Mammary epithelial cell (primary cell): ENCODE measurements at regions of chr12 and their contacts with region 1.

Region 1: DNA sequence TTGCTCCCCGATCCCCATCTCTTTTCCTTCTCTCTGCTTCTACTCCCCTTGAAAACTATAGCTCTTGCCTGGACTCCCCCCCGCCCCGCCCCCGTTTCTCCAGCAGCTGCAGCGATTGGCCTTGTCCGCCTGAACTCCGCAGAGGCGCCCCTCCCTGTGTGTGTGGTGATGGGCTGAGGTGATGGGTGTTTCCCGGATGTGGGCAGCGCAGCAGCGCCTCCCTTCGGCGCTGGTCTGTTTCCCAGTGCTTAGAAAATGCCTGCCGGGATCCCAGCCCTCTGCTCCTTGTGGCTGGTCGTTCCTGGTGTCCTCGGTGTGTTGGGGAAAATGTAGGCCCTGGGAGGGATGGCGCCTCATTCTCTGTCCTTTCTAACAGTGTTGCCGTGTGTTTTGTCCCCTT is 43.3 kb downstream of the GALNT8 start:
- DNase-seq: no peak
- H3K4me3 ChIP-seq: no peak overlapping the region
- H3K27ac ChIP-seq: no peak overlapping the region
- H3K4me1 ChIP-seq: no peaks in the 10 kb centered on the region
- H3K27me3 ChIP-seq: no peaks in the 10 kb centered on the region
- CTCF ChIP-seq: peak; percentile 7 to 31

Region 2: DNA sequence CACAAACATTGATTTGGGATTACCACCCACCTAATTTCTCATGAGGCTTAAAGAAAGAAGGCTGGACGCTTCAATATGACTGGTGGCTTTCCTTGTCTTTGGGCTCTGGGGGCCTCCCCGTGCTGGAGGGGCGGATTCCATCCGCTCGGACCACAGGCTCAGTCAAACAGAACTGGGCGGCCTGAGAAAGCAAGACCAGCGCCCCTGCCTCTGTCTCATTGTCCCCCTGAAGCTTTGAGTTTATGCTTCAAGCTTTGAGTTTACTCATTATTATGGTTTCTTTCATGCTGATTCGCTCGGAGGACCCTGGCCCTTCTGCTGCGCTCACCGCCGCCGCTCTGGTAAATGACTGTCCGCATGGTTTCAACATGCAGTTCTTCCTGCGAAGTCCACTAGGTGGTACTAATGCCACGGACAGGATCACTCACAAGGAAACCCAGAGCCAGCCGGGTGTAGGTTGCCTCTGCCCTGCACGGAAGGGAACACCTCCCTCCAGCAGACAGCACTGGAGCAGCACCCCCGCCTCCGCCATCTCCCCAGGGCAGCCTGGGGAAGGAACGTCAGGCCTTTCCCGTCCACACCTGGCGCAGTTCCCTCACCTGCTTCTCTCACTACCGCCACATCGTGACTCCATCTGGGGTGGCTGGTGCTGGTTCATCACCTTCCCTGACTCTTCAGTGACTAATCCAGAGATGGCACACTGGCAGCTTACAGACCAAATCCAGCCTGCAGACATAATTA is 455.8 kb before region 1 on chr12:
- CTCF ChIA-PET with region 1: no interaction called
- dilution Hi-C with region 1: no loop called
- in situ Hi-C with region 1: no loop called
- intact Hi-C with region 1: loop called (anchors 5 kb)
- DNase-seq: peak; percentile 98
- H3K4me3 ChIP-seq: no peak overlapping the region
- H3K27ac ChIP-seq: no peak overlapping the region
- H3K4me1 ChIP-seq: peaks cover 13% of the 10 kb centered on the region
- H3K27me3 ChIP-seq: no peaks in the 10 kb centered on the region
- CTCF ChIP-seq: peak; percentile 55 to 76

Region 3: DNA sequence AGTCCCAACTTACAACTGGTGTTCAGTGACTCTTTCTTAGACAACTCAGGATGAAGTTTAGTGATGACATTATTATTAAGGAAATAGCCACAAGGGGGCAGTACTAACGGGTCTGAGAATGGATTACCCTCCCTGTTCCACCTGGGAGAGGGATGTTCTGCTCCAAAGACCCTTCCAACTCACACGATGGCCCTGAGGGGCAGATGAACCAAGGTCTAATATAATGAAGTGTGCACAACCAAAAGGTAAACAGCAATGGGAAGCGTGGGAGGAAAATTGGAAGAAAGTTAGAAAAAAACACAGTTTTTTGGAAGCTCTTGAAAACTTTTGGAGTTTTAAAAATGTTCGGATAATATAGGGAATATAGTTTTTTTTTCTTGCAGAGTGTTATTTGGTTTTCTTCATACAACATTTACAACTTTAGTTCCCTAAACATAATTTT is 341.9 kb before region 1 on chr12:
- CTCF ChIA-PET with region 1: no interaction called
- dilution Hi-C with region 1: no loop called
- in situ Hi-C with region 1: no loop called
- intact Hi-C with region 1: loop called (anchors 2 kb)
- DNase-seq: peak; percentile 17
- H3K4me3 ChIP-seq: no peak overlapping the region
- H3K27ac ChIP-seq: no peak overlapping the region
- H3K4me1 ChIP-seq: no peaks in the 10 kb centered on the region
- H3K27me3 ChIP-seq: peaks cover 2% of the 10 kb centered on the region
- CTCF ChIP-seq: peak; percentile 47 to 63

Region 4: GRCh38 chr12:4538207-4539160 is 225.1 kb before region 1 on chr12 and contains the start of gene RAD51AP1:
- CTCF ChIA-PET with region 1: no interaction called
- dilution Hi-C with region 1: no loop called
- in situ Hi-C with region 1: no loop called
- intact Hi-C with region 1: loop called (anchors 1 kb)
- DNase-seq: peak; percentile 95
- H3K4me3 ChIP-seq: peak within 1 kb of the TSS; percentile 76 to 100 (median 99)
- H3K27ac ChIP-seq: peak within 1 kb of the TSS; percentile 99
- H3K4me1 ChIP-seq: peaks cover 14% of the 10 kb centered on the region
- H3K27me3 ChIP-seq: no peaks in the 10 kb centered on the region
- CTCF ChIP-seq: no peak
- total RNA-seq, gene RAD51AP1: 3.0 to 23.4 TPM

Region 5: GRCh38 chr12:4579305-4580102 is 184.0 kb before region 1 on chr12:
- CTCF ChIA-PET with region 1: no interaction called
- dilution Hi-C with region 1: no loop called
- in situ Hi-C with region 1: loop called in 1 of 2 experiments (anchors 25 kb)
- intact Hi-C with region 1: no loop called
- DNase-seq: no peak
- H3K4me3 ChIP-seq: no peak overlapping the region
- H3K27ac ChIP-seq: no peak overlapping the region
- H3K4me1 ChIP-seq: no peaks in the 10 kb centered on the region
- H3K27me3 ChIP-seq: peaks cover 3% of the 10 kb centered on the region
- CTCF ChIP-seq: peak in 1 of 2 donors; percentile 23

Region 6: DNA sequence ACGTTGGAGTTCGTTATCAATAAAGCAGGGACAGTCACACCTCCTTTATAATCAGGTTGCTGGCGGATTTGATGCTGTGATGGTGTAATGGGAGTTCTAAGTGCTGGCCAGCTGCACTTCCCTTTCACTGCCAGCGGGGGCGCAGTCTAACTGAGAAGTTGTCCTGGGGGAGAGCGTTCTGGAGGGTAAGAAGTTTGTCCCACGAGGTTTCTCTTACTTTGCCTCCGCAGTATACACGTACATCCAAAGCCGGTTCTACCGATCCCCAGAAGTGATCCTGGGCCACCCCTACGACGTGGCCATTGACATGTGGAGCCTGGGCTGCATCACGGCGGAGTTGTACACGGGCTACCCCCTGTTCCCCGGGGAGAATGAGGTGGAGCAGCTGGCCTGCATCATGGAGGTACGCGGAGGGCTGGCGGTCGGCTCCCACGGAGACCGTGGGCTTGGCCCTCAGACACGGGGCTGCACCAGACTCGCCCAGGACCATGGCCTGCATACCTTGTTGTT is 158.8 kb before region 1 on chr12:
- CTCF ChIA-PET with region 1: no interaction called
- dilution Hi-C with region 1: no loop called
- in situ Hi-C with region 1: loop called (anchors 10 to 25 kb)
- intact Hi-C with region 1: loop called (anchors 1 kb)
- DNase-seq: peak; percentile 81
- H3K4me3 ChIP-seq: peak overlapping the region; percentile 91 to 99 (median 96)
- H3K27ac ChIP-seq: peak overlapping the region; percentile 61
- H3K4me1 ChIP-seq: no peaks in the 10 kb centered on the region
- H3K27me3 ChIP-seq: no peaks in the 10 kb centered on the region
- CTCF ChIP-seq: peak; percentile 97 to 99

Region 7: DNA sequence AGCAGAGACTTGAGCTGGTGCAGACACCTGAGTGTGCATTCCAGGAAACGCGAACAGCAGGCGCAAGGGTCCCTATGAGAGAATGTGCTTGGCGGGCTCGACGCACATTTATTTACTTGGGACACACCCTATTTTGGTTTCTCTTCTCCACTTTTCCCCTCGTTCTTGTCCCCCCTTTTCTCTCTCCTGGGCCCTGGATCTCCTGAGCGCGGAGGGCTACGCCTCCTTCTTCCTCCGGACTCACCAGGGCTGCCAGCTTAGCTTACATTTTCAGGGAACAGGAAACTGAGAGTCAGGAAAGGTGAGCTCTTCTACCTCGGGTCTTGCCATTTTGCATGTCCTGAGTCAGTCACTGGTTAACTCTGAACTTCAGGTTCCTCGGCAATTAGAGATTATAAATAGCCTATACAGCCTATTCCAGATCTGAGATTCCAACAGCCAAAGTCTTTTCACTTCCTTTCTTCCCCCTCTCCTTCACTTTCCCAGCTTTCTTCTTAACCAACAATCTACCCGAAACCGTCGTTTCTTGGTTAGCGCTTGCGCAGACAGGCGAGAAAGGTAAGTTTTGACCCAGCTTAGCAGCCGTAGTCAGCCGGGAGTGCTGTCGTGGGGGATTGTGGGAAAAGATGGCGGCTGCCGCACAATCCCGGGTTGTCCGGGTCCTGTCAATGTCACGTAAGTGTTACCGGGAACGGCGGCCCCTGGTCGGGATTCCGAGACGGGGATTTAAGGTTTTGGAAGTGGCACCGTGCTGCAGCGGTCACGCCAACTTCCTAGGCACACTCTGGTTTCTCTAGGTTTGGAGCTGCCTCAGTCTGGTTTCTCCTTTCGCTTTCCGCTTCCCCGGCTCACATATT is 114.8 kb before region 1 on chr12 and contains the starts of genes AKAP3 and NDUFA9:
- CTCF ChIA-PET with region 1: no interaction called
- dilution Hi-C with region 1: no loop called
- in situ Hi-C with region 1: no loop called
- intact Hi-C with region 1: no loop called
- DNase-seq: peak; percentile 83
- H3K4me3 ChIP-seq: peak within 1 kb of the TSS; percentile 67 to 90 (median 76)
- H3K27ac ChIP-seq: peak within 1 kb of the TSS; percentile 95
- H3K4me1 ChIP-seq: peaks cover 19% of the 10 kb centered on the region
- H3K27me3 ChIP-seq: no peaks in the 10 kb centered on the region
- CTCF ChIP-seq: no peak
- total RNA-seq, gene AKAP3: 0.83 to 1.5 TPM
- total RNA-seq, gene NDUFA9: 37.8 to 94.1 TPM

Region 8: GRCh38 chr12:4710113-4710512 is 53.4 kb before region 1 on chr12:
- CTCF ChIA-PET with region 1: no interaction called
- dilution Hi-C with region 1: loop called (anchors 5 kb)
- in situ Hi-C with region 1: no loop called
- intact Hi-C with region 1: no loop called
- DNase-seq: no peak
- H3K4me3 ChIP-seq: no peak overlapping the region
- H3K27ac ChIP-seq: no peak overlapping the region
- H3K4me1 ChIP-seq: no peaks in the 10 kb centered on the region
- H3K27me3 ChIP-seq: no peaks in the 10 kb centered on the region
- CTCF ChIP-seq: no peak

Region 9: DNA sequence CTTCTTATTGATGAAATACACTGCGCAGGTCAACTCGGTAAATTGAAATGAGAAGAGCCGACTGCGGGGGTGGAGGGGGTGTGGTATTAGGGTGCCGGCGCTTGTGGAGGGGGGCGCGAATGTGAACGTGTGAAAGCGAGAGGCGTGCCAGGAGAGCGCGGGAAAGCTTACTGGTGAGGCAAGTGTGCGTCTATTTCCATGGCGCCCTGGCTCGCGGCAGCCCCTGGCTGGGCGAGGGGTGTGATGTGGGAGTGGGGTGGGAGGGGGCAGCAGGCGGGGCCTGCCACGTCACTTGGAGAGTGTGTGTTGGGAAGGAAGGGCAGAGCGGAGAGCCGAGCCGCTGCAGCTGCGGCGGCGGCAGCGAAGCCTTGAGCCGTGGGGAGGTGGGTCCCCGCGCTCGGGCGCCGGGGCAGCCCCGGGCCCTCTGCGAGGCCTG is 45.5 kb after region 1 on chr12:
- CTCF ChIA-PET with region 1: no interaction called
- dilution Hi-C with region 1: no loop called
- in situ Hi-C with region 1: no loop called
- intact Hi-C with region 1: no loop called
- DNase-seq: no peak
- H3K4me3 ChIP-seq: no peak overlapping the region
- H3K27ac ChIP-seq: no peak overlapping the region
- H3K4me1 ChIP-seq: no peaks in the 10 kb centered on the region
- H3K27me3 ChIP-seq: peaks cover 29% of the 10 kb centered on the region
- CTCF ChIP-seq: no peak